GM12878 (cell line): ENCODE measurements at regions of chr11 and their contacts with region 1.

Region 1: DNA sequence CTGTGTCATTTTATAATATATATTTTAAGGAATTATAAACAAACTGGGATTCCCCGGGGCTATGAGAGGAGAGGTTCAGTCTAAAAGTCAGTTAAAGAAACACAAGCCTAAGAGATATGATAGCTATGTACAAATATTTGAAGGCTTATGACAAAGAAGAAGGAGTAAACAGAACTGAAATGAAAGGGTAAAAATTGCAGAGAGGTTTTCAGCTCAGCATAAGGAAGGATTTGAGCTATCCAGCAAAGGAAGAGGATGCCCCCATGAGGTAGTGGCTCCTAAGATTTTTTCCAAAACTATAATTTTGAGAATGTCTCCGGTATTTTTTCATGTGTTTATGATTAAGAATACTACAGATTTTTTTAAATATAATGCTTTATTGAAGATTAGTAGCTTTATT is 57.9 kb upstream of the ANGPTL5 start:
- DNase-seq: no peak
- ATAC-seq: no peak
- H3K4me3 ChIP-seq: no peak overlapping the region
- H3K27ac ChIP-seq: no peak overlapping the region
- H3K4me1 ChIP-seq: no peaks in the 10 kb centered on the region
- H3K27me3 ChIP-seq: no peaks in the 10 kb centered on the region
- CTCF ChIP-seq: no peak
- EP300 ChIP-seq: no peak
- POLR2A ChIP-seq: no peak
- RAD21 ChIP-seq: no peak

Region 2: DNA sequence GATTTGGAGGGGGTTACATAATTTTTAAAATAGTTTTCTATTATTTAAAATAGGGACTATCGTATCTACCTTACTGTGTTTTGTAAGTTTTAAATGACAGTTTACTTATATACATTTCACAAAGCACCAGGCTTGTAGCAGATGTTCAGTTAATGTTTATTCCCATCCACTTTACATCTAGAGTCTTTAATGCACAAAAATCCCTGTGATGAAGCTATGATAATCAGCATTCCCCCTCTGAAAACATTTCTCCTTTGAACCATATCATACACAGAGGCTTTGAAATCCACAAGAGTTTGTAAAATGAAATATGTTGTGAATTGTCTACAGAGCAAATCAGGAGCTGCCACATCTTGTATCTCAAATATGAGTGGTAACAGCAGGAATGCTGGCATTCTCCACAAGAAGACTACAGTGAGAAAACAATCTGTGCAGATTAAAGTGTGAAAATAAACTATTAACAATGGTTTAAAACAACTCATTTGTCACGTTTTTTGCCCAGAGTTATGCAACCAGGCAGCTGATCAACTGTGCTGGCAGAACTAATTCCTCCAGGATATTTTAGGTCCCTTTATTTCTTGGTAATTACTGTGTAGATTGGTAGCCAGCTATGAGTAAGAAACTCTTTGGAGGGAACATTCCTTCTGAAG is 1986.3 kb before region 1 on chr11:
- CTCF ChIA-PET with region 1: no interaction called
- POLR2A ChIA-PET with region 1: no interaction called
- RAD21 ChIA-PET with region 1: no interaction called
- SMC1A ChIA-PET with region 1: no interaction called
- in situ Hi-C with region 1: no loop called
- intact Hi-C with region 1: loop called (anchors 10 kb)
- DNase-seq: no peak
- ATAC-seq: no peak
- H3K4me3 ChIP-seq: no peak overlapping the region
- H3K27ac ChIP-seq: no peak overlapping the region
- H3K4me1 ChIP-seq: no peaks in the 10 kb centered on the region
- H3K27me3 ChIP-seq: no peaks in the 10 kb centered on the region
- CTCF ChIP-seq: no peak
- EP300 ChIP-seq: no peak
- POLR2A ChIP-seq: no peak
- RAD21 ChIP-seq: no peak

Region 3: DNA sequence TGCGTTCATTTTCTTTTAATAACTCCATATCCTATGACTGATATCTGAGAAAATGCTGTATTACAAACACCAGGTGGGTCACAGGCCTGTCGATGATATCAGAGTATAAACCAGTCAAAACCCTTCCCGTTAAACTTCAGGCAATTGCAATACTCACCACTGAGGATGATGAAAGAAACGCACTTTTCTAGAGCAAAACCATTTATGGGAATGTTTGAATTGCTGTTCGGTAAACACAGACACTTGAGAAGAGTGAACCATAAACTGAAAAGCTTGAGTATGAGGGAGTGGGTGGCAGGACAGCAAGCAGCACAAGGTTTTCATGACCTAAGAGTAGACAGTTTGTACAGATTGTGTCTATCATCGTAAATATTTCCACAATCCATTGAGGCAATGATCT is 199.2 kb before region 1 on chr11:
- CTCF ChIA-PET with region 1: no interaction called
- POLR2A ChIA-PET with region 1: no interaction called
- RAD21 ChIA-PET with region 1: no interaction called
- SMC1A ChIA-PET with region 1: no interaction called
- in situ Hi-C with region 1: no loop called
- intact Hi-C with region 1: no loop called
- DNase-seq: no peak
- ATAC-seq: no peak
- H3K4me3 ChIP-seq: no peak overlapping the region
- H3K27ac ChIP-seq: no peak overlapping the region
- H3K4me1 ChIP-seq: no peaks in the 10 kb centered on the region
- H3K27me3 ChIP-seq: no peaks in the 10 kb centered on the region
- CTCF ChIP-seq: no peak
- EP300 ChIP-seq: no peak
- POLR2A ChIP-seq: no peak
- RAD21 ChIP-seq: no peak

Region 4: DNA sequence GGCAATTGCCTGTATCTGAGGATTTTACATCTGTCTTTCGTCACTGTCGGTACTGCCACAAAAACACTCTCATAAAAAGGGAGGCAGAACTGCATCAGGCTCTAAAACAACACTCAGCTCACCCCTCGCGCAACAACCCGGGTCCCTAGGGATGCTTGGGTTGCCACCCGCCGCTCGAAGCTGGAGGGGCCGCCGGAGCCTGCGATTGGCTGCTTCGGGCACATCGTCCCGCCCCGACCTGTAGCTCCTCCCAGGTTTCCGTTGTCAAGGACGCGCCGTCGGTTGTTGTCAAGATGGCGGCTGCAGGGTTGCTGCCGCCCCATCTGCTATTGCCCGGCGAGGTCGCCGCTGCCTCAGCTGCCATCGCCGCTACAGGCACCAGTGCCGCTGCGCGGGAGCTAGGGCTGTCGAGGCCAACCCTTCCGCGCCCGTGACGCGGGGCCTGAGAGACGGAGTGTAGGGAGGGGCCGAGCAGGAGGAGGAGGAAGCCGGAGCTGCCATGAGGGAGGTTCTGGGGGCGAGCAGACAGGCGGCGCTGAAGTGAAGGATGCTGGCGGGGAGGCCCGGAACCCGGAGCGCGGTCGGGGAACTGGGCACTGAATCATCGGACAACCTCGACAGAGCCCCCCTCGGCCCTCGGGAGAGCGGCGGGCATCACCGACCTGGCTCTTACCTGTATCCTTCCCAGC is 59.4 kb before region 1 on chr11 and contains the start of gene CEP126:
- CTCF ChIA-PET with region 1: no interaction called
- POLR2A ChIA-PET with region 1: no interaction called
- RAD21 ChIA-PET with region 1: no interaction called
- SMC1A ChIA-PET with region 1: no interaction called
- in situ Hi-C with region 1: no loop called
- intact Hi-C with region 1: no loop called
- DNase-seq: peak; percentile 32
- ATAC-seq: peak; percentile 99
- H3K4me3 ChIP-seq: peak within 1 kb of the TSS; percentile 68
- H3K27ac ChIP-seq: no peak within 1 kb of the TSS
- H3K4me1 ChIP-seq: 0 out of 2 replicates have a peak, but pooled peaks cover 3% of the 10 kb centered on the region
- H3K27me3 ChIP-seq: no peaks in the 10 kb centered on the region
- CTCF ChIP-seq: peak in 2 of 3 experiments; percentile 5 to 11; a peak in 1 of 6 replicates
- EP300 ChIP-seq: no peak
- POLR2A ChIP-seq: no peak
- RAD21 ChIP-seq: no peak
- polyA plus RNA-seq, gene CEP126: not detected